HAP-1 (cell line): ENCODE measurements at regions of chr12 and their contacts with region 1.

Region 1: GRCh38 chr12:22443379-22444316 is 100.7 kb downstream of the C2CD5 start:
- DNase-seq: peak; percentile 66 to 72
- H3K4me3 ChIP-seq: no peak overlapping the region
- H3K4me1 ChIP-seq: no peaks in the 10 kb centered on the region
- H3K27me3 ChIP-seq: peaks cover 6% of the 10 kb centered on the region

Region 2: GRCh38 chr12:21751517-21751916 is 692.1 kb before region 1 on chr12:
- in situ Hi-C with region 1: no loop called
- DNase-seq: no peak
- H3K4me3 ChIP-seq: no peak overlapping the region
- H3K4me1 ChIP-seq: no peaks in the 10 kb centered on the region
- H3K27me3 ChIP-seq: no peaks in the 10 kb centered on the region

Region 3: DNA sequence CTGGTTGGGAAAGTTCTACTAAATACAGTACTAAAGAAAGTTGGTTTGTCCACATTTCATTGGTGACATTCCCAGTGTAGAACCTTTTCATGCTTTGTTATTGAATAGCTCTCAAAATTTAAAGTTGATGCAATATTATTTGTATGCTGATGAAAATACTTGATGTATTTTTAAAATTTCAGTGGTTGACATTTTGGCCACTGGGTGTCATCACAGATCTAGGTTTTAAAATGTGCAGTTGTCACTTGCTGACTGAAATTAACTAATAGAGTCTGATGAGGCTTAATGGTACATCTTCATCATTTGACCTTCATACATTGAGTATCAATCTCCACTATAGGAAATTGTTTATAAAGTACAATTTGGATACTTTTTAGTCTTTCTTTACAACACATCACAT is 360.5 kb before region 1 on chr12:
- in situ Hi-C with region 1: loop called (anchors 25 kb)
- DNase-seq: no peak
- H3K4me3 ChIP-seq: no peak overlapping the region
- H3K4me1 ChIP-seq: no peaks in the 10 kb centered on the region
- H3K27me3 ChIP-seq: no peaks in the 10 kb centered on the region

Region 4: GRCh38 chr12:22299294-22299912 is 144.2 kb before region 1 on chr12:
- in situ Hi-C with region 1: no loop called
- DNase-seq: no peak
- H3K4me3 ChIP-seq: no peak overlapping the region
- H3K4me1 ChIP-seq: no peaks in the 10 kb centered on the region
- H3K27me3 ChIP-seq: no peaks in the 10 kb centered on the region